Activated CD4-positive, alpha-beta memory T cell treated with anti-CD3 and anti-CD28 coated beads, Interleukin-2, amount 10 ng/mL, durations not matched to agents 7 days and 5 days (primary cell): ENCODE measurements at regions of chr1 and their contacts with region 1.

Region 1: GRCh38 chr1:42173155-42173933 is 8.8 kb upstream of the GUCA2A start:
- DNase-seq: peak; percentile 69
- H3K4me3 Mint-ChIP-seq: no peak overlapping the region
- H3K27ac Mint-ChIP-seq: no peak overlapping the region
- H3K4me1 Mint-ChIP-seq: no peaks in the 10 kb centered on the region
- H3K27me3 Mint-ChIP-seq: no peaks in the 10 kb centered on the region

Region 2: DNA sequence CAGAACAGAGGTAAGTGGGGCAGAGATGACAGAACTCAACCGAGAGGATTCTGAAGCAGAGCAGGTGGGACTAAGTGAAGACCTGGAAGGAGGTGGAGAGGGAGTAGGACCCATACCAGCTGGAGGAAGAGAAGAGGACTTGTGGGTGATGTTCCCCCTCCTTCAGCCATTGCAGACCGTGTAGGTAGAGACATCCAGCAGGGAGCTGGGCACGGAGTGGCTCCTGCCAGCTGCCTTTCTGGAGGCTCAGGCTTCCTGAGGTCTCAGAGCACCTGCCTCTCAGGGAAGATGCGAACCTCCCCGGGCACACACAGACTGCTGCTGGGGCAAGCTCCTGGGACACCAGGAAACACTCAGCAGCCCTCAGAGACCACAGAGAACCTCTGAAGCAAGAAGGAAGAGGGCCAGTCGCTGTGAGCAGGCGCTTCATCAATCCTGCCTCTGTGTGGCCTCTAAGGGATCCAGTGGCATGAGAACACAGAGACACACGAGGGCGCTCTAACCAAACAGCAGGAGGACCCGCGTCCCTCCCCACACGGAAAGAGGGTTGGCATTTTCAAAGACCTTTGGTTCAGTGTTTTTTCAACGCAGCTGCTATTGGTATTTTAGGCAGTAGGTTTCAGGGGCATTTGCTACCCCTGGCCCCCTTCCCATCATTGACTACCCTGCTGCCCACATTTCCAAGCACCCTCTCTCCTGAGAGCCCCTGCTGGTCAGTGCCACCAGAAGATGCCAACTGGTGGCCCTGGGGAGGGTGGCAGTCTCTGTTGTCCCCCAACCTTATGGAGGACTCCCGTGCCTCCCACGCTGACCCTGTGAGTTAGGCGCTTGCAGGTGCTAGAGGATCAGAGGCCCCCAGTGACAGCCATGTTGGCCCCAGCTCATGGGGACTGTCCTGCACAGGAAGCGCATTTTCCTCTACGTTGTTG is 599.3 kb before region 1 on chr1:
- CTCF ChIA-PET with region 1: interaction called, 14 read pairs
- POLR2A ChIA-PET with region 1: interaction called, 3 read pairs
- DNase-seq: peak; percentile 88
- H3K4me3 Mint-ChIP-seq: no peak overlapping the region
- H3K27ac Mint-ChIP-seq: peak overlapping the region; percentile 12
- H3K4me1 Mint-ChIP-seq: peaks cover 24% of the 10 kb centered on the region
- H3K27me3 Mint-ChIP-seq: no peaks in the 10 kb centered on the region

Region 3: GRCh38 chr1:42085596-42085995 is 87.7 kb before region 1 on chr1:
- CTCF ChIA-PET with region 1: no interaction called
- POLR2A ChIA-PET with region 1: no interaction called
- DNase-seq: no peak
- H3K4me3 Mint-ChIP-seq: no peak overlapping the region
- H3K27ac Mint-ChIP-seq: no peak overlapping the region
- H3K4me1 Mint-ChIP-seq: no peaks in the 10 kb centered on the region
- H3K27me3 Mint-ChIP-seq: peaks cover 20% of the 10 kb centered on the region

Region 4: GRCh38 chr1:42146626-42147320 is 26.6 kb before region 1 on chr1:
- CTCF ChIA-PET with region 1: interaction called, 16 read pairs
- POLR2A ChIA-PET with region 1: no interaction called
- DNase-seq: peak; percentile 73
- H3K4me3 Mint-ChIP-seq: no peak overlapping the region
- H3K27ac Mint-ChIP-seq: no peak overlapping the region
- H3K4me1 Mint-ChIP-seq: peaks cover 4% of the 10 kb centered on the region
- H3K27me3 Mint-ChIP-seq: peaks cover 16% of the 10 kb centered on the region

Region 5: GRCh38 chr1:42186152-42186551 is 12.8 kb after region 1 on chr1:
- CTCF ChIA-PET with region 1: interaction called, 10 read pairs
- POLR2A ChIA-PET with region 1: no interaction called
- DNase-seq: no peak
- H3K4me3 Mint-ChIP-seq: no peak overlapping the region
- H3K27ac Mint-ChIP-seq: no peak overlapping the region
- H3K4me1 Mint-ChIP-seq: peaks cover 7% of the 10 kb centered on the region
- H3K27me3 Mint-ChIP-seq: no peaks in the 10 kb centered on the region

Region 6: DNA sequence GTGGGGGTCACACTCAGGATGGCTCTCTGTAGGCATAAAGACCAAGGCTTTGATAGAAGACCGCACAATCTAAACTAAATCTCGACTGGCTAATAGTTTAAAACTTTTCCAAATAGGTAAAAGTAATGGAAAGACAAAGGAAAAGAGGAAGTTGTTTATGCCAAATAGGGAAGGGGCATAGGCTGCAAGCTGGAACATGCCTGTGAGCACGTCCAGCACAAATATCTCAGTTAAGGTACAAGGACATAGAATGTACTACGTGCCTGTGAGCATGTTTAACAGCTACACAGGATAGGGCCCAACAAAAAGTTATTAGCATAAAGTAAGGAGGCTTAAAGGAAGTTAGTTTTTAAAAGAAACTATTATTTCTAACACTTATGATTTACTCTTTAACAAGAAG is 18.8 kb after region 1 on chr1:
- CTCF ChIA-PET with region 1: interaction called, 11 read pairs
- POLR2A ChIA-PET with region 1: no interaction called
- DNase-seq: no peak
- H3K4me3 Mint-ChIP-seq: no peak overlapping the region
- H3K27ac Mint-ChIP-seq: no peak overlapping the region
- H3K4me1 Mint-ChIP-seq: peaks cover 5% of the 10 kb centered on the region
- H3K27me3 Mint-ChIP-seq: no peaks in the 10 kb centered on the region

Region 7: GRCh38 chr1:42201986-42202385 is 28.6 kb after region 1 on chr1:
- CTCF ChIA-PET with region 1: interaction called, 10 read pairs
- POLR2A ChIA-PET with region 1: no interaction called
- DNase-seq: no peak
- H3K4me3 Mint-ChIP-seq: no peak overlapping the region
- H3K27ac Mint-ChIP-seq: no peak overlapping the region
- H3K4me1 Mint-ChIP-seq: peaks cover 2% of the 10 kb centered on the region
- H3K27me3 Mint-ChIP-seq: no peaks in the 10 kb centered on the region

Region 8: DNA sequence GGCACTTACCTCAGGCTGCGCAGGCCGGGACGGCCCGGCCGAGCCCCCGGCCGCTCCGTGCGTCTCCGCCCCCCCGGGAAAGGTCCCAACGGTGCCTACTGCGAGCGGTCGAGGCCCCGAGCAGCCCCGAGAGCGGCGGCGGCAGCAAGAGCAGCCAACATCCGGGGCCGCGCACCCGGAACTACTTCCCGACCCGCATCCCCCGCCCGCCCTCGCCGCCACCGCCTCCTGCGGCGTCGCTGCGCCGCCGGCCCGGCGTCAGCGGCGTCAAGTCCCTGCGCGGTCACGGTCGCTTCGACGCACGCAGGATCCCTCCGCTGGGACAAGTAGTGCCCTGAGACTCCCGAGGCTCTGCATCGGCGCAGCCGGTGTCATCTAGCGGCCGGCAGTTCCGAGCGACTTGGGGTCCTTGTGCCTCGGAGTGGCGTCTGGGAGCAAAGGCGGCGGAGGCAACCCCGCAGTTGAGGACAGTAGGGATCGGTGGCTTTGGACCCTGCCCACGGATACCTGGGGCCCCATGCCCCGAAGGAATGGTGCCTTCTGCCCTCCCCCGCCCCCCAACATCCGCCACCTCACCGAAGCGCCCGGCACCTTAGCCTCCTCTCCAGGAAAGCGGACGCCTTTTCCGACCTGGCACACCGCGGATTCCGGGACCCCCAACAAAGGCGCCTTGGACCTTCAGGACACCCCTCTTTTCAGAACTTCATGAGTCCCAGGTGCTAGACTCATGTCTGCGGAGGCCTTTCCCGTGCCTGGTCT is 161.9 kb after region 1 on chr1 and contains the start of gene FOXJ3:
- CTCF ChIA-PET with region 1: interaction called, 15 read pairs
- POLR2A ChIA-PET with region 1: no interaction called
- DNase-seq: peak; percentile 92
- H3K4me3 Mint-ChIP-seq: peak within 1 kb of the TSS; percentile 92
- H3K27ac Mint-ChIP-seq: peak within 1 kb of the TSS; percentile 84
- H3K4me1 Mint-ChIP-seq: peaks cover 49% of the 10 kb centered on the region
- H3K27me3 Mint-ChIP-seq: no peaks in the 10 kb centered on the region
- total RNA-seq, gene FOXJ3: 44.9 to 47.1 TPM